Right cardiac atrium (tissue), 5 donors: ENCODE measurements at regions of chr11 and their contacts with region 1.

Region 1: DNA sequence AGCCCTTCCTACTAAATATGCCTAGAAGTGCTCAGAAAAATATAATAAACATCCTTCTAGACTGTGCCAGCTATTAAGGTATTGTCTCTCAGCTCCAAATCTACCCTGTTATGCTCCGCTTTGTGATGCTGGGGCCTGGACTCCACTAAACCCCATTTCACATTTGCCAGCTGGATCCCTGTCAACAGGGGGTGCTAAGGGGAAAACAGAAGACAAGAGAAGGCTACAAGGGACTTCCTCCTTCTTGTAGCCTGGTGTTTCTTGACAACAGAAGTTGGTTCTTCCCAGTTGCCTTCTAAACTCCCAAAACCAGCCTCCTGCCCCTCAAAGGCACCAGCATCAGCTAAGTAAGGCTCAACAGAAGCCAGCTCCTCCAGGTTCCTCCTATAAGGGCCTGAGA is 5.2 kb downstream of the NUMA1 start:
- DNase-seq: no peak
- ATAC-seq: no peak
- H3K4me3 ChIP-seq: no peak overlapping the region
- H3K27ac ChIP-seq: no peak overlapping the region
- H3K4me1 ChIP-seq: peaks cover 2% of the 10 kb centered on the region
- H3K27me3 ChIP-seq: no peaks in the 10 kb centered on the region

Region 2: DNA sequence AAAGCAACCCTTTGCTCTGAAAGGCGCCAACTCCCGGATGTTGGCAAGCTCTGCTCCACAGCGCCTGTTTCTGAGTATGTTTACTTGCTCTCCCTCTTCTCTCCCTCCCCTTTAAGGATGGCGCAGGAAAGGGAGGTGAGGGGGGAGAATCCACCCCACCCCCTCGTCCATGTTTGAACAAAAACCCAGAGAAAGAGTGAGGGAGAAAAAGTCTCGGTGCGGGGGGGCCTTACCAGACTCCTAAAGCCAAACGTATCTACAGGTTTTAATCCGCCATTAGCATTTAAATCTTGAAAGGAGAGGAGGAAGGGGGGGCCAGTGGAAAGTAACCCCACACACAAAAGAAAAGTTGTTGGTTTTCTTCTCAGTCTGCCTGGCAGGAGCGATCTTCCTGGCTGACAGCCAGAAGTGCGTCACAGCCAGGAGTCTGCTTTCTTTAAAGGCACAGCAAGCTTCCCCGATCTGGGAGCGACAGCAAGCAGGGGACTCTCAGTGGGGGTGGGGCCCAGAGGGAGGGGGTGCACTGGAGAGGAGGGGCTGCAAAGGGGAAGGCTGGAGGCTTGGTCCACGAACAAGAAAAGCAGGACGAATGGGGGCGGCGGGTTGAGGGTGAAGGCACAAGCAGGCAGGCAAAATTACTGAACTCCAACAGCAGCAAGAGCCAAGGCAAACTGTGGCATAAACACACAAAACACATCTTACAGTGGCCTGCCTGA is 34.2 kb before region 1 on chr11:
- intact Hi-C with region 1: loop called in 2 of 4 experiments (anchors 5 kb)
- DNase-seq: peak; percentile 96 to 99 (median 99)
- ATAC-seq: peak; percentile 88 to 89
- H3K4me3 ChIP-seq: peak overlapping the region; percentile 59
- H3K27ac ChIP-seq: peak overlapping the region; percentile 91
- H3K4me1 ChIP-seq: peaks cover 14% of the 10 kb centered on the region
- H3K27me3 ChIP-seq: no peaks in the 10 kb centered on the region